CD4-positive, alpha-beta memory T cell (primary cell): ENCODE measurements at regions of chr12 and their contacts with region 1.

Region 1: DNA sequence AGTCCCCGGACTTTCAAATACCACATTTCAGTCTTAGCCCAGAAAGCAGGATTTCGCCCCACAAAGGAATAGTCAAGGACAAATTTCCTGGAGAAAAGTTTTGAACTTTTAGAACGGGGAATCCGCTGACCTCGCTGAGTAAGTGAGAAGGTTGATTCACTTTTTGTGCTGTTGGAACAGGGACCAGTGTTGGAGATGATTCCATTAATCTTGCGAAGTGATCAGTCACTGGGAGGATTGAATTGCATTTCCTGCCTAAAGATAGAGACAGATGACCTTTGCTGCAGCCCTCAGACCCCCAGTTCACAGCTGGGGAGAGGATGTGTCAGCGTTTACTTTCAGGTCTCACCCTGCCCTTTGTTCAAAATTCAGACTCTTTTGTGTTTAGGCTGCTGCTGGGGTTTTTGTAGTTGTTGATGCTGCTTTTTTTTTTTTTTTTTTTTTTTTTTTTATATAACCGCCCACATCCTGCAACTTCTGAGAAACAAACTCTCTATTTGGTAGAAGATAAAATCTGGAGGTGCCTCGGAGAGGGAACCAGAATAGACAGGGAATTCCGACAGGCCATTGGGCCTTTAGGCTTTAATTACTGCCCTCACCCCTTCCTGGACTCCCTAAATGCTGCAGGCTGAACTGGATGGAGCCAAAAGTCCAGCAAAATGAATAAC is 9.8 kb upstream of the KDM2B start:
- DNase-seq: peak; percentile 84 to 86 (median 85)
- H3K4me3 ChIP-seq: peak overlapping the region; percentile 42 to 62
- H3K4me3 Mint-ChIP-seq: peak overlapping the region; percentile 87 to 94 (median 92)
- H3K27ac ChIP-seq: peak overlapping the region; percentile 97
- H3K27ac Mint-ChIP-seq: peak overlapping the region; percentile 94 to 100 (median 99)
- H3K4me1 ChIP-seq: peaks cover 52% of the 10 kb centered on the region
- H3K4me1 Mint-ChIP-seq: peaks cover 23 to 49% (median 35%) of the 10 kb centered on the region in 4 donors
- H3K27me3 ChIP-seq: no peaks in the 10 kb centered on the region
- H3K27me3 Mint-ChIP-seq: no peaks in the 10 kb centered on the region

Region 2: DNA sequence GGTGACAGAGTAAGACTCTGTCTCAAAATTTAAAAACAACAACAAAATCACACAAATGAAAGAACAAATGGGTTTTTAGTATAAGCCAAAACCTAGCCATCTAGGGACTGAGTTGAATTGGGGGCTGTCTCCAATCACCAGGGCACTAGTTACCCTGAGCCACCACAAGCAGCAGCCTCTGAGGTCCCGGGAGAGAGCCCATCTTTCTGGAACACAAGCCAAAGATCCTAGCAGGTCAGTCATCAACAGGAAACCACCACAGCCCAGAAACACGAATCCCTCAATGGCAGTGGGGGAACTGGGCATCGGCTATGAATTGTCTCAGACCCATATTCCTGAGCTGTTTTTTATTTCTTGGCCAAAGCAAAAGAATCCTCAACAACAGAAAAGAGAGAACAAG is 85.1 kb before region 1 on chr12:
- CTCF ChIA-PET with region 1: no interaction called
- POLR2A ChIA-PET with region 1: no interaction called
- intact Hi-C with region 1: no loop called
- DNase-seq: no peak
- H3K4me3 ChIP-seq: no peak overlapping the region
- H3K4me3 Mint-ChIP-seq: no peak overlapping the region
- H3K27ac ChIP-seq: no peak overlapping the region
- H3K27ac Mint-ChIP-seq: peak overlapping the region in 5 of 7 donors; percentile 10 to 64 (median 46)
- H3K4me1 ChIP-seq: no peaks in the 10 kb centered on the region
- H3K4me1 Mint-ChIP-seq: peaks cover 0 to 10% (median 3%) of the 10 kb centered on the region in 4 donors
- H3K27me3 ChIP-seq: no peaks in the 10 kb centered on the region
- H3K27me3 Mint-ChIP-seq: no peaks in the 10 kb centered on the region

Region 3: DNA sequence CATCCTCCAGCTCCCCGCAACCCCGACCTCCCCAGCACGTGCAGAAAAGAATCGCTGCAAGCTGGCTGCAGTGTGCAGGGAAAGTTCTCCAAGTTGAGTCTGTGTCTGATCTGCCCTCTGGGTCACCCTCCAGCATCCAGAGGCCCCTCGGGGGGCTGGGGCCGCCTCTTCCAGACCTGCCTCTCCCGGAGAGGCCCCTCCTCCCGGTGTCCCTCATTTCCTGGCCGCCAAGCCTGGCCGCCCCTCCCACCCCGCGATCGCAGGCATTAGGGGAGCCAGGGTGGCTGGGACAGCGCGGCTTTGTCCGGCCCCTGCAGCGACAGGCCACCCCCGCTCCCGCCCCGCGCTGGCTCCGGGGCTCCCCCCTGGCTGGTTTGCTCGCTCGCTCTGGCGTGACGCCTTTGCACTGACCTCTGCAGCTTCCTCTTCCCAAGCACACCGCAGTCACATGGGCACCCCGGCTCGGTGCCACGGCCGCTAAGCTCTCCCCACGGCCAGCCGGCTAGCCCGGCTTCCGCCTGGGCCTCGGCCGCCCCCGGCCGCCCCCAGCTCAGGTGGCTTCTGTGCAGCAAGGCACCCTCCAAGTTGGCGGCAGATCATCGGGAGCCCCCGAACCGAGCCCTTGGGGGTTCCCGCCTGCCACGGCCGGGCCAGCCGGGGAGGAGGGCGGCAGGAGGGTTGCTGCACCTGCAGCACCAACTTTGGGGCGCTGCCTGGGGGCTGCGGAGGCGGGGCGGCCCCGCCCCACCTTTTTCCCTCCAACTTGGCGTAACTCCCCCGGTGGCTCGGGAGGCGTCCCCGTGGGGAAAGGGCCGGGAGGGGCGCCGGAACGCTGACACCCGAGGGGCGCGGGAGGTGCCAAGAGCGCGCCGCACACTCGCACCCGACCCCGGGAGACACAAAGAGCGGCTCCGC is 53.5 kb before region 1 on chr12:
- CTCF ChIA-PET with region 1: interaction called, 3 read pairs
- POLR2A ChIA-PET with region 1: interaction called, 16 read pairs
- intact Hi-C with region 1: no loop called
- DNase-seq: peak; percentile 46 to 75 (median 48)
- H3K4me3 ChIP-seq: peak overlapping the region; percentile 29 to 55
- H3K4me3 Mint-ChIP-seq: peak overlapping the region; percentile 62 to 86 (median 82)
- H3K27ac ChIP-seq: peak overlapping the region; percentile 80
- H3K27ac Mint-ChIP-seq: peak overlapping the region; percentile 95 to 99 (median 95)
- H3K4me1 ChIP-seq: peaks cover 57% of the 10 kb centered on the region
- H3K4me1 Mint-ChIP-seq: peaks cover 29 to 69% (median 48%) of the 10 kb centered on the region in 4 donors
- H3K27me3 ChIP-seq: no peaks in the 10 kb centered on the region
- H3K27me3 Mint-ChIP-seq: no peaks in the 10 kb centered on the region

Region 4: GRCh38 chr12:121560392-121561008 is 30.1 kb before region 1 on chr12:
- CTCF ChIA-PET with region 1: no interaction called
- POLR2A ChIA-PET with region 1: interaction called, 12 read pairs
- intact Hi-C with region 1: loop called (anchors 5 kb)
- DNase-seq: no peak
- H3K4me3 ChIP-seq: no peak overlapping the region
- H3K4me3 Mint-ChIP-seq: no peak overlapping the region
- H3K27ac ChIP-seq: no peak overlapping the region
- H3K27ac Mint-ChIP-seq: peak overlapping the region in 6 of 7 donors; percentile 18 to 72 (median 38)
- H3K4me1 ChIP-seq: no peaks in the 10 kb centered on the region
- H3K4me1 Mint-ChIP-seq: peaks cover 7 to 18% (median 12%) of the 10 kb centered on the region in 4 donors
- H3K27me3 ChIP-seq: no peaks in the 10 kb centered on the region
- H3K27me3 Mint-ChIP-seq: no peaks in the 10 kb centered on the region

Region 5: DNA sequence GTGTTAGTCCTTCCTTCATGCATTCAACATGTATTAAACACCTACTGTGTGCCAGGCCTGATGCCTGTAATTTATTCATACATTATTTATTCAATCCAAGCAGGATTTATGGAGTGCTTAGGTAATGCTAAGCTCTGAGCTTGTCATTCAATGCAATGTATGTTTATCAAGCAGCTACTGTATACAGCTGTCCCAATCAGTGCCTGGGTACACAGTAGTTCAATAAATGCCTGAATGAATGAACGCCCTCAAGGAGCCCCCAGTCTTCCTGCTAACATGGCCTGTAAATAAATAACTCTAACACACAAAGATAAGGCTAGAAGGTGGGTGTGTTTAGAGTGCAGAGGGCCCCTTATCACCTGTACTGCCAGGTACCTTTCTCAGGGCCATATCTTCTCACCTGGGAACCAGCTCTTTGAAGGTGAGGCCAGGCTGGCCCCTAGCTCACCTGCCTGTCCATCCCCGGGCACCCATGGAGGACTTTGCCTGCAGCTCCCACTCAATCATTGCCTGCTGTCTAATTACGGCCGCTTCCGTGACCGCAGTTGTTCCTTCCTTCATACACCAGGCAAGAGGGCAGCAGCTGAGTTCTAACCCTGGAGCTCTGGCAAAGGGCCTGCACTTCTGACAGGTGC is 10.2 kb after region 1 on chr12:
- CTCF ChIA-PET with region 1: interaction called, 3 read pairs
- POLR2A ChIA-PET with region 1: interaction called, 10 read pairs
- intact Hi-C with region 1: no loop called
- DNase-seq: no peak
- H3K4me3 ChIP-seq: no peak overlapping the region
- H3K4me3 Mint-ChIP-seq: no peak overlapping the region
- H3K27ac ChIP-seq: no peak overlapping the region
- H3K27ac Mint-ChIP-seq: no peak overlapping the region
- H3K4me1 ChIP-seq: no peaks in the 10 kb centered on the region
- H3K4me1 Mint-ChIP-seq: peaks cover 0 to 4% (median 1%) of the 10 kb centered on the region in 4 donors
- H3K27me3 ChIP-seq: no peaks in the 10 kb centered on the region
- H3K27me3 Mint-ChIP-seq: no peaks in the 10 kb centered on the region

Region 6: GRCh38 chr12:121688966-121689365 is 98.4 kb after region 1 on chr12:
- CTCF ChIA-PET with region 1: interaction called, 3 read pairs
- POLR2A ChIA-PET with region 1: interaction called, 3 read pairs
- intact Hi-C with region 1: loop called (anchors 1 kb)
- DNase-seq: no peak
- H3K4me3 ChIP-seq: no peak overlapping the region
- H3K4me3 Mint-ChIP-seq: no peak overlapping the region
- H3K27ac ChIP-seq: no peak overlapping the region
- H3K27ac Mint-ChIP-seq: peak overlapping the region in 5 of 7 donors; percentile 12 to 48 (median 37)
- H3K4me1 ChIP-seq: peaks cover 6% of the 10 kb centered on the region
- H3K4me1 Mint-ChIP-seq: peaks cover 6 to 13% (median 7%) of the 10 kb centered on the region in 4 donors
- H3K27me3 ChIP-seq: no peaks in the 10 kb centered on the region
- H3K27me3 Mint-ChIP-seq: no peaks in the 10 kb centered on the region

Region 7: GRCh38 chr12:121738340-121738858 is 147.8 kb after region 1 on chr12:
- CTCF ChIA-PET with region 1: no interaction called
- POLR2A ChIA-PET with region 1: no interaction called
- intact Hi-C with region 1: no loop called
- DNase-seq: no peak
- H3K4me3 ChIP-seq: no peak overlapping the region
- H3K4me3 Mint-ChIP-seq: no peak overlapping the region
- H3K27ac ChIP-seq: no peak overlapping the region
- H3K27ac Mint-ChIP-seq: no peak overlapping the region
- H3K4me1 ChIP-seq: no peaks in the 10 kb centered on the region
- H3K4me1 Mint-ChIP-seq: peaks cover 0 to 2% (median 0%) of the 10 kb centered on the region in 4 donors
- H3K27me3 ChIP-seq: no peaks in the 10 kb centered on the region
- H3K27me3 Mint-ChIP-seq: no peaks in the 10 kb centered on the region

Region 8: DNA sequence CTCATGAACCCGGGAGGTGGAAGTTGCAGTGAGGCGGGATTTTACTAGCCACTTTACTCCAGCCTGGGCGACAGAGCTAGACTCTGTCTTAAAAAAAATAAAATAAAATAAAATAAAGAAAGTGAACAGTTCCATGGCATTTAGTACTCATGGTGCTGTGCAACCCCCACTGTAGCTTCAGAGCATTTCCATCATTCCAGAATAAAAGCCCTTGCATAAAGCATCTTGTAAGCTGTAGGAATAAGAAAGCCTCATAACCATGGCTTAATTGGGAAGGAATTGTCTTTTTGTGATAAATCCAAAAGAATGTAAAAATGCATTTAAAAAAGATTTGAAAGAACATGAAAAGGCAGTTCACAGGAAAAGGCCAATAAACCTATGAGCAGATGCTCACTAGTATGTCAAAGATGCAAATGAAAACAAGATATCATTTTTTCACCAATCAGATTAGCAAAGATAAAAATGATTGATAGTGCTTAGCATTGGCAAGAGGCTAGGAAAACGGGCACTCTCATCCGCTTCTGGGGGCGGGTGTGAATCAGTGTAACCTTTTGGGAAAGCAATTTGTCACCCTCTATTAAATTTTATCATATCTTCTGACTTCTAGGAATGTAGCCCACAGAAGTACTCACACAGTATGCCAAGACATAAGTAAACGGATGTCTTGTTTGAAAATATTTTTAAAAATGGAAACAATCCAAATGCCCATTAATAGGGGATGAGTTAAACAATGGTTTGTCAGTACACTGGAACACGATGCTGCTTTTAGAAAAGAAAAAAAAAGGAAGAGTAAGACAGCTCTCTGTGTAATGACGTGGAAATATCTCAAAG is 374.4 kb after region 1 on chr12:
- CTCF ChIA-PET with region 1: no interaction called
- POLR2A ChIA-PET with region 1: no interaction called
- intact Hi-C with region 1: no loop called
- DNase-seq: no peak
- H3K4me3 ChIP-seq: no peak overlapping the region
- H3K4me3 Mint-ChIP-seq: no peak overlapping the region
- H3K27ac ChIP-seq: no peak overlapping the region
- H3K27ac Mint-ChIP-seq: no peak overlapping the region
- H3K4me1 ChIP-seq: no peaks in the 10 kb centered on the region
- H3K4me1 Mint-ChIP-seq: no peaks in the 10 kb centered on the region
- H3K27me3 ChIP-seq: no peaks in the 10 kb centered on the region
- H3K27me3 Mint-ChIP-seq: peaks cover 0 to 2% of the 10 kb centered on the region in 2 donors

Region 9: DNA sequence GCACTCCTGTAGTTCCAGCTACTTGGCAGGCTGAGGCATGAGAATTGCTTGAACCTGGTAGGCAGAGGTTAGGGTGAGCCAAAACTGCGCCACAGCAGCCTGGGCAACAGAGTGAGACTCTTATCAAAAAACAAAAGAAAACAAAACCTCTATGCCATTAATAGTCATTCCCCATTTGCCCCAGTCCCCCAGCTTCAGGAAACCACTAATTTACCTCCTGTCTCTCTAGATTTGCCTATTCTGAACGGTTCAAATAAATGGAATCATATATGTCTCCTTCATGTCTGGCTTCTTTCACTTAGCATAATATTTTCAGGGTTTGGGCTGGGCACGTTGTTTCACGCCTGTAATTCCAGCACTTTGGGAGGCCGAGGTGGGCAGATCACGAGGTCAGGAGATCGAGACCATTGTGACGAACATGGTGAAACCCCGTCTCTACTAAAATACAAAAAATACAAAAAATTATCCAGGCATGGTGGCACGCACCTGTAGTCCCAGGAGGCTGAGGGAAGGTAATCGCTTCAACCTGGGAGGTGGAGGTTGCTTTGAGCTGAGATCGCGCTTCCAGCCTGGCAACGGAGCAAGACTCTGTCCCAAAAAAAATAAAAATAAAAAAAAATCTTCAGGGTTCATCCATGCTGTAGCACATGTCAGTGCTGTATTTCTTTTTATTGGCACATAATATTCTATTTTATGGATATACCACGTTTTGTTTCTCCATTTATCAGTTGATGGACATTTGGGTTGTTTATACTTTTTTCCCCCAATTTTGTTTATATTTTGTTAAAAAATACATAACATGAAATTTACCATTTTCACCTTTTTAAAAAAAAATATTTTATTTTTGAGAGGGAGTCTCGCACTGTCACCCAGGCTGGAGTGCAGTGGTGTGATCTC is 968.4 kb after region 1 on chr12:
- CTCF ChIA-PET with region 1: no interaction called
- POLR2A ChIA-PET with region 1: no interaction called
- intact Hi-C with region 1: no loop called
- DNase-seq: no peak
- H3K4me3 ChIP-seq: no peak overlapping the region
- H3K4me3 Mint-ChIP-seq: no peak overlapping the region
- H3K27ac ChIP-seq: no peak overlapping the region
- H3K27ac Mint-ChIP-seq: no peak overlapping the region
- H3K4me1 ChIP-seq: no peaks in the 10 kb centered on the region
- H3K4me1 Mint-ChIP-seq: no peaks in the 10 kb centered on the region
- H3K27me3 ChIP-seq: no peaks in the 10 kb centered on the region
- H3K27me3 Mint-ChIP-seq: no peaks in the 10 kb centered on the region